Activated T-helper 1 cell treated with anti-CD3 and anti-CD28 coated beads, Interleukin-12 subunit alpha, Interleukin-12 subunit beta, Interleukin-2, Interleukin-4 antibody, amounts not matched to agents 30 ng/mL and 10 ng/mL and 1 ng/mL, durations not matched to agents 14 hours and 24 hours and 36 hours (primary cell): ENCODE measurements at regions of chr20 and their contacts with region 1.

Region 1: DNA sequence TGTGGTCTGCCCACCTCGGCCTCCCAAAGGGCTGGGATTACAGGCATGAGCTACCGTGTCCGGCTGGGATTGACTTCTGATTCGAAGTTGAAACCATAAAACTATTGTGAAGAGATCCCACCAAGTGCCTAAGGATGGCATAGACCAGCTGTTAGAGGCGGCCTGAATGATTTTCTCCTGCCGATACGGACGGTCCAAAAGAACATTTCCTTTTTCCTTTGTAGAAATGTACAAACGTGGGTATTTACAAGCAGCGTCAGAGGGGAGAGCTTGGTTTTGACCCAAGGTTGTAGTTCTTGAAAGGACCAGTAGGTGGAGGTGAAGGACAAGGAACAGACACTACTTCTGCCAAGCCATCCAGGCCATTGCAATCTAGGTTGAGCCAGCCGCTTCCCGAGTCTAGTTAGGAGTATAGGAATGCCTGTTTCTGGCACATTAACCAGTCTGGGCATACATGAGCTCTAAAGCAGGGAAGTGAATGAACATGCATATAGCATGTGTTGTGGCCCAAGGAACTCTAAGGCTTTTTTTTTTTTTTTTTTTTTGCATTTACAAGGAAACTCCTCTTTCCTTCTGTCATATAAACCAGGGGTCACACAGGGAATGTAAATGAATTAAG is 29.1 kb downstream of the MOCS3 start:
- DNase-seq: peak; percentile 56
- H3K4me3 Mint-ChIP-seq: no peak overlapping the region
- H3K27ac Mint-ChIP-seq: no peak overlapping the region
- H3K4me1 Mint-ChIP-seq: peaks cover 5% of the 10 kb centered on the region
- H3K27me3 Mint-ChIP-seq: peaks cover 17% of the 10 kb centered on the region

Region 2: DNA sequence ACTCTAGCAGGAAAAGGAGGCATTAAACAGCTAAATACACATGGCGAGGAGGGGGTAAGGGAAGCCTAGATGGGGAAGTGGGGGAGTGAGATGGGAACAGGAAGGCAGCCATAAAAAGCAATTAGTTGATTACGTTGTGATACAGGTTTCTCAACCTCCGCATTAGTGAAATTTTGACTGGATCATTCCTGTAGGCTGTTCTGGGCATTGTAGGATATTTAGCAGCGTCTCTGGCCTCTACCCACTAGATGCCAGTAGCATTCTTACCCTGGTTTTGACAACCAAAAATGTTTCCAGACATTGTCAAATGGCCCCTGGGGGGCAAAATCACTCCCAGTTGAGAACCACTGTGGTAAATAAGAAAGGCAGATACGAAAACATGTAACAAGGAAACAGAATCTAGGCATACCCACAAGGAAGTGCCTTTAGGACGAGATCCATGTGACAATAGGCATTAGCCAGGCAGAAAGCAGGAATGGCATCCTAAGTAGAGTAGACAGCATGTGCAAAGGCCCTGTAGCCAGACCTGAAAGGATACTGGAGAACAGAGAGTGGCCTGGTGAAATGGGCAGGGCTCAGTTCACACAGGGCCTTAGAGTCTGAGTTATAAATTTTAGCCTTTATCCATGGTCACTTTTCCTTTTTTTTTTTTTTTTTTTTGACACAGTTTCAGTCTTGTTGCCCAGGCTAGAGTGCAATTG is 503.3 kb before region 1 on chr20:
- intact Hi-C with region 1: no loop called
- DNase-seq: no peak
- H3K4me3 Mint-ChIP-seq: peak overlapping the region; percentile 89
- H3K27ac Mint-ChIP-seq: peak overlapping the region; percentile 95
- H3K4me1 Mint-ChIP-seq: peaks cover 37% of the 10 kb centered on the region
- H3K27me3 Mint-ChIP-seq: peaks cover 2% of the 10 kb centered on the region

Region 3: DNA sequence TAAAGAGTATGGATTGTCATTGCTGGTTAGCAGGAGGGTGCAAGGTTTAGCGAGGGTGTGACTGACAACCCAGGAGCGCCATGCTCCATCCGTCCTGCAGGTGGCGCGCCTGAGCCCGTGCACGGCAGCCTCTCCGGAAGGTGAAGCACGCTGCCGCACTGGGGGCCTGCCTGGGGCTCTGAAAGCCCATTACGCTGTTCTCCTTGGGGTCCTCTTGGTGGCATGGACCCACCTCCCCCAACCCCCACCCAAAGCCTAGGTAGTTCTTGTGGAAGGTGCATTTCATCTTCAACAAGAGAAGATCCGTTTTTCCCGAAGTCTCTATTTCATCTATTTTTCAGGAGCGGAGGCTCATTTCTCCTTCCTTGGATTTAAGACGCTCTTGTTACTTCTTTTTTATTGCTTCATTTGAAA is 232.6 kb after region 1 on chr20:
- intact Hi-C with region 1: loop called (anchors 1 kb)
- DNase-seq: peak; percentile 33
- H3K4me3 Mint-ChIP-seq: no peak overlapping the region
- H3K27ac Mint-ChIP-seq: no peak overlapping the region
- H3K4me1 Mint-ChIP-seq: peaks cover 14% of the 10 kb centered on the region
- H3K27me3 Mint-ChIP-seq: peaks cover 24% of the 10 kb centered on the region

Region 4: DNA sequence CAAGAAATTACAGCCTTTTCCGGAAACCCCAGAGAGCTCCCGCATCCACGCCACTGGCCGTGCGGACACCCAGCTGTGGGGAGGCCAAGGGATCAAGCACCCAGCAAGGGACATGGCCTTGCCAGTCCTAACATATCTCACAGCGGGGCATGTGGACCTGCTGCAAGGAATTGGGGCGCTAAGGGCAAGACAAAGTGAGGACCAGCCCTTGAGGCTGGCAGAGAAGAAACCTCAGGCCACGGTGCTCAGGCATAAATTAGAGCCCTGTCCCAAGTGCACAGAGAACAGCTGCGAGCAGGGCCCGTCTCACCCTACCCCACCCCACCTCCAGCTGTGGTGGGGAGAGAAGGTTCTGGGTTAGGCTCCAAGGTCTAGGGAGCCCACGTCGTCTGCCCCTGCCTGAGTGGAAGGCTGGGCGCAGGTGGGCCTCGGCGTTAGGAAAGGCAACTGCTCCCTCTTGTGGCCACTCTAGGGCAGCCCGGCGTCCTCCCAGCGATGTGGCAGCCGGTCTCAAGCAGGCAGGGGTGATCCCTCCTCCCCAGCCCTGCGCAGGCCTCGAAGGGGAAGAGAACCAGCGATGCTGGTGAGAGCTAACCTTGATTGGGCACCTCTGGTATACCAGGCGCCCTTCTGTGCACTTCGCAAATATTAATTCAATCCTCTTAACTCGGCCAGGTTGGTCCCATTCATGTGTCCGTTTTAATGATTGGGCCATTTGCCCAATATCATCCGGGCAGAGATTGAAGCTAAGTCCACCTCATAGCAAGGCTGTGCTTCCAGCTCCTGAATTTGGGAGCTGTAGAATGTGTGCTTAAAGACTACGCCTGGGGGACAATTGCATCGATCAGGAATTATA is 319.0 kb after region 1 on chr20:
- intact Hi-C with region 1: loop called (anchors 1 kb)
- DNase-seq: peak; percentile 49
- H3K4me3 Mint-ChIP-seq: no peak overlapping the region
- H3K27ac Mint-ChIP-seq: no peak overlapping the region
- H3K4me1 Mint-ChIP-seq: peaks cover 7% of the 10 kb centered on the region
- H3K27me3 Mint-ChIP-seq: peaks cover 23% of the 10 kb centered on the region

Region 5: DNA sequence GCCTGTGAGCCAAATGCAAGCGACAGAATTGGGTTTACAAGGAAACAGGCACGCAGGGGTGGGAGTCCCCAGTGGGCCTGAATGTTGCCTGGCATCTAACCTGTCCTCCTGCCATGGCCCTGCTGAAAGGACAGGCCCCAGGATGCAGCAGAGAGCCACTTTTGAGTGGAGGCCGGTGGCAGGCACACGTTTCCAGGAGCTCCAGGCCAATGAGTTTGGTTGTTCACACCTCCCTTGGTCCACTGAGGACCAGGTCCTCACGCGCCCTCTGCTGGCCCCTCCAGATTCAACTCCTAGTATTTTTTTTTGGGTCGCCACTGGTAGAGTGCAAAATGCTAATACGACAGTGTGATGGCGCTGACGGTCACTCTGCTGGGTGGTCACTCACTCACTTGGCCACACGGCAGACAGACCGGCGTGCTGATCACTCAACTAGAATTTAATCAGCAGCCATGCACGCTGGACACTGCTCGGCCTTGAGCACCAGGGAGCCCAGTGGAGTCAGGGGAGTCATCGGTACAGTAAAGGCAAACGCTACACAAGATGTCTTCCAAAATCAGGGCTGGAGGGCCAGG is 636.5 kb after region 1 on chr20:
- intact Hi-C with region 1: loop called (anchors 2 kb)
- DNase-seq: peak; percentile 31
- H3K4me3 Mint-ChIP-seq: no peak overlapping the region
- H3K27ac Mint-ChIP-seq: no peak overlapping the region
- H3K4me1 Mint-ChIP-seq: peaks cover 19% of the 10 kb centered on the region
- H3K27me3 Mint-ChIP-seq: peaks cover 2% of the 10 kb centered on the region

Region 6: GRCh38 chr20:51800060-51800794 is 812.5 kb after region 1 on chr20:
- intact Hi-C with region 1: loop called (anchors 10 kb)
- DNase-seq: peak; percentile 38
- H3K4me3 Mint-ChIP-seq: peak overlapping the region; percentile 74
- H3K27ac Mint-ChIP-seq: peak overlapping the region; percentile 44
- H3K4me1 Mint-ChIP-seq: peaks cover 3% of the 10 kb centered on the region
- H3K27me3 Mint-ChIP-seq: peaks cover 72% of the 10 kb centered on the region